Mammary epithelial cell (primary cell): ENCODE measurements at regions of chr3 and their contacts with region 1.

Region 1: DNA sequence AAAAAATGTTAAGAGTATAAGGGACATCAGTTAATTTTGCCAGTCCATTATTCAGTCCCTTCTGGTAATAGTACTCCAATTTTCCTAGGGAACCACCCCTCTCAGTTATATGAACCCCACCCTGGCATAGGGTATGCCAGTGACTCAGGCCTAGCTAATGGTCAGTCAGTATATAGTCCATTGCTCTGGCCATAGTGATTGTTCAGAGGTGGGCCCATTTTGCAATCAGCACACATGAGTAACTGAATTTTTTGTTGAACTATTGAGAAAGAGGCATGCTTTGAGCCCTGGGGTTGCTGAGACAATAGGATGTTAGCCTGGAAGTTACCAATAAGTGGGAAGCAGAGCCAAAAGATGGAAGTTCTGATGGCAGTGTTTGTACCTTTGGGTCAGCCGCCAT is 4.1 kb downstream of the LRCH3 start:
- DNase-seq: peak; percentile 71
- H3K4me3 ChIP-seq: no peak overlapping the region
- H3K27ac ChIP-seq: peak overlapping the region; percentile 48
- H3K4me1 ChIP-seq: peaks cover 27% of the 10 kb centered on the region
- H3K27me3 ChIP-seq: no peaks in the 10 kb centered on the region
- CTCF ChIP-seq: no peak

Region 2: GRCh38 chr3:197711973-197712707 is 83.1 kb before region 1 on chr3:
- CTCF ChIA-PET with region 1: no interaction called
- dilution Hi-C with region 1: no loop called
- in situ Hi-C with region 1: no loop called
- intact Hi-C with region 1: no loop called
- DNase-seq: peak; percentile 98
- H3K4me3 ChIP-seq: peak overlapping the region; percentile 15 to 57 (median 44)
- H3K27ac ChIP-seq: peak overlapping the region; percentile 99
- H3K4me1 ChIP-seq: peaks cover 16% of the 10 kb centered on the region
- H3K27me3 ChIP-seq: no peaks in the 10 kb centered on the region
- CTCF ChIP-seq: no peak

Region 3: GRCh38 chr3:197758512-197758911 is 36.7 kb before region 1 on chr3:
- CTCF ChIA-PET with region 1: no interaction called
- dilution Hi-C with region 1: loop called (anchors 5 kb)
- in situ Hi-C with region 1: no loop called
- intact Hi-C with region 1: no loop called
- DNase-seq: no peak
- H3K4me3 ChIP-seq: no peak overlapping the region
- H3K27ac ChIP-seq: no peak overlapping the region
- H3K4me1 ChIP-seq: no peaks in the 10 kb centered on the region
- H3K27me3 ChIP-seq: no peaks in the 10 kb centered on the region
- CTCF ChIP-seq: no peak

Region 4: DNA sequence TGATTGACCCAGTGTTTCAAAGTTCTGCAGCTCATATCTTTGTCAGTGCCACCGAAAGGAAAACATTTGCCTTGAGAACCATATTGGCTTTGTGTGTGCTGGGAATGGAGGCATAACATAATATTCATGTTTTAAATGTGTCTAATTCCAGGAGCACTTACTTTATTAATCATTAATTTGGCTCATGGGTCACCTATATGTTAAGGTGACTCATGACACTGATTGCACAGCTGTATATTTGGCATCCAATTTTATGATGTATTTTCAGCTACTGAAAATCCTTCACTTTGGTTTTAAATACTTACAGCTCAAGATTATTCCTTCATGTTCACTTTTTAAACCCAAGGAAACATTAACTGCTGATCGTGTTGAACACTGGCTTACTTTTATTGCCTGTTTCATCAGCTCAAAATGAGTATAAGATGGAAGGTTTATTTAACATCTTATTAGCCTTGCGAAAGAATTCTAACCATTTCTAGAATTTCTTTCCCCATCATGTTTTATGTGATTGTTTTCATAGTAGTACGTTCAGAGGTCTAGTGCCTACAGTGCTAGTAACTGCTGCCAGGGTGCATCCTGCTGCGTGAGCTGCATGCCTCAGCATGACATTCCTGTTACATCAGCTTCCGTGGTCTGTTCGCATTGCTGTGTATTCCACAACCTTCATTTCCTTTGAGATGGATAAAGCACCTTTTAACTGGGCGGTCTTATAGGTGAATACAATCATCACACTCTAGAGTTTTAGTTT is 59.6 kb after region 1 on chr3:
- CTCF ChIA-PET with region 1: no interaction called
- dilution Hi-C with region 1: no loop called
- in situ Hi-C with region 1: no loop called
- intact Hi-C with region 1: loop called (anchors 2 kb)
- DNase-seq: peak; percentile 90
- H3K4me3 ChIP-seq: peak overlapping the region in 1 of 3 experiments; percentile 0
- H3K27ac ChIP-seq: peak overlapping the region; percentile 77
- H3K4me1 ChIP-seq: peaks cover 21% of the 10 kb centered on the region
- H3K27me3 ChIP-seq: no peaks in the 10 kb centered on the region
- CTCF ChIP-seq: no peak

Region 5: DNA sequence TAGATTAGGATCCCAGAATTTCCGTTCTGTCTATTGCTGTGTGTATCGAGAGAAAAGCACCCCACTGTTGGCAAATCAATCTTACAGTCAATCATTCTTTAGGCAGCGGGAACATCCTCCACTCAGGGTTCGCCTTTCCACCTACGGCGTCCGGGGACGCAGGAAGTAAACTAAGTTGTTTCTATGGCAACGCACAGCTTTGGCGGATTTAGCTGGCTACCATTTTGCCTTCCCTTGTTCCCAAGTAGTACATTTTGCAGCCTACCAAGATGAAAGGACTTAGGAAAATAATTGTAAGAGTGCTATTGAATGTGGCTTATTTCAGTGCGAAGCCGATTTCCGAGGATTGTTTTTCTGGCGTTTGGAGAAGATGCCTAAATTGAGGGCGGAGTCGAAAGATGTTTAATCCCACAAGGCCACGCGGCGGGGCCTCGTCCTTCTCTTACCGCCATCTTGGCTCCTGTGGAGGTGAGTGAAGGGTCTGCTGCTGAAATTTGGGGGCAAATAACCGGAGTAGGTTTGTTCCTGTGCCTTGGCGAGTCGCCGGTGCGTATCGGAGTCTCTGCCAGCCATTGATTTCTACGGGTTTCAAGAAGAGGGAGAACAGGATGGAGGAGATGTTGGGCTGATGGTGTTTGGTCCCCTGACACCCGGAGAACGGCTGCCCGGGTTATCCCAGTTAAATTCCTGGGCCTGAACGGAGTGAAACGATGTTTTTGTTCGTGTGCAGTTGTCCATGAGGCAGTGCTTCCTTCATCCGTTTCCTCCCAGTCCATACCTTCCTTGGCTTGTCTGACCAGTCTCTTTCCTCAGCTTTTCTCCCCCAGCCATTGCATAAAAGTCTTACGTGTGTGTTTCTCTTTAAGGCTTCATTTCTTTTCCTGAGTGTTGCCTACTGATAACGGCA is 154.8 kb after region 1 on chr3 and contains the start of gene RPL35A:
- CTCF ChIA-PET with region 1: no interaction called
- dilution Hi-C with region 1: no loop called
- in situ Hi-C with region 1: no loop called
- intact Hi-C with region 1: no loop called
- DNase-seq: peak; percentile 93
- H3K4me3 ChIP-seq: peak within 1 kb of the TSS; percentile 58 to 95 (median 74)
- H3K27ac ChIP-seq: peak within 1 kb of the TSS; percentile 95
- H3K4me1 ChIP-seq: peaks cover 14% of the 10 kb centered on the region
- H3K27me3 ChIP-seq: no peaks in the 10 kb centered on the region
- CTCF ChIP-seq: no peak
- total RNA-seq, gene RPL35A: 318 to 928 TPM

Region 6: DNA sequence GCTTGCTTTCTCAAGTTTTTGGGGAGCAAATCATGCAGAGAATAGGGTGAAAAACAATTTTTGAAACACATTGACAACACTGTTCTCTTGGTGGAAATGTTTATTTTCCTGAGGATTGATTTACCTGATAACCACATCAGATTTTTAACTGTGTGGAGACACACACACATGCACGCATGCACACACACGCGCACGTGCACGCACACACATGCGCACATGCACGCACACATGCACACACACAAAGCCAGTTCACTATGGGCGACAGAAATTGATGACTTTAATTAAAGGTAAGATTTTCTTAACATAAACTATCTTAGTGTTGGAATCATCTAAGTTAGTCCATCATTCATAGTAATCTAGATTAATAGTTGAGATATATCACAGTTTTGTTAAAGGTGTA is 180.1 kb after region 1 on chr3:
- CTCF ChIA-PET with region 1: no interaction called
- dilution Hi-C with region 1: no loop called
- in situ Hi-C with region 1: no loop called
- intact Hi-C with region 1: no loop called
- DNase-seq: no peak
- H3K4me3 ChIP-seq: no peak overlapping the region
- H3K27ac ChIP-seq: no peak overlapping the region
- H3K4me1 ChIP-seq: no peaks in the 10 kb centered on the region
- H3K27me3 ChIP-seq: no peaks in the 10 kb centered on the region
- CTCF ChIP-seq: no peak